RWPE1 (cell line): ENCODE measurements at regions of chr11 and their contacts with region 1.

Region 1: DNA sequence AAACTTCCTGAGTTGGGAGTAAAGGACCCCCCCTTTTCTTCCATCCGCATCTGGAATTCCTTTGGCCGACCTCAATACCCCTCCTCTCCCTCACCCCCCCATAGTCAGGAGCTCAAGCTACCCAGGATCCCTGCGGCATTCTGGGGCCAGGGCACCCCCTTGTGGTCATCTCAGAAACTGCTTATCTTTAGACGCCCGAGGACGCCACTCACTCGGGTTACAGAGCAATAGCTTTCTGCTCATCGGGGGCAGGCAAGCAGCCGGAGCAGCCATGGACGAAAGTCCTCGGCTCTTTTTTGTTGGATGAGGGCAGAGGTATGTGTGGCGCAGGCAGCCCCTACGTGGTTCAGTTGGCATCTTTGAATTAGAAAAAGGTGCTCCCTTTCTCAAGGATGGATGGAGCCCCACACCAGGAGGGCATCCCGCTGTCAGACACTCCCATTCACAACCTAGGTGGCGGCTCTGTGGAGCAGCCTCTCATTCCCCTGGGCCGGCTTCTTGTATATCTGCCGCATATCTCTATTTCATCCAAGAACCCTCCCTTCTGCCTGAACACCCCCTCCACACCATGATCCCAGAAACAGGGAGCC is 2.3 kb downstream of the C1QTNF5 start:
- DNase-seq: peak; percentile 73
- H3K27ac ChIP-seq: peak overlapping the region; percentile 82
- CTCF ChIP-seq: peak; percentile 85

Region 2: DNA sequence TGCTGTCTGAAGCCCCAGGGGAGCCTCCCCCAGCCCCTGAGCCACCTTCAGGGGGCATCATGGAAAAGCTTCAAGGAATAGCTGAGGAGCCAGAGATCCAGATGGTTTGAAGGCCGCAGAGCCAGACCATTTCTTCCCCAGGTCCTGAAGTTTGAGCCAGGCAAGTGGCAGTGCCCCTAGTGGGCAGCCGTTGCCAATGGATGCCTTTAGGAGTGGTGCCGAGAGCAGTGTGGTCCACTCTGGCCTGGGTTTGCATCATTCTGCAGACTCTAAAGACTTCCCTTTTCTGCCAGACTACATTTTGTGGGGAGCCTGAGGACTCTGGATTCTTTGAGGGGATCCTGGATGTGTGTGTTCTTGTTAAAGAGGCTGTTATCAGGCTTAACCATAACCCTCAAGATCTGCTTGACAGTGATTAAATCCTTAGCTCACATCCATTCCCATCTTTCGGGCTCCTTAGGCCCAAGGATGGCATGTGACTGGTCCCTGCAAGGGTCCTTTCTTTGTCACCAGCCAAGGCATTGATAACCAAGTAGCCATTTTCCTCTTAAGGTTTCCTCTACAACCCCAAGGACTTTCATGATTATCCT is 203.9 kb before region 1 on chr11:
- CTCF ChIA-PET with region 1: interaction called, 3 read pairs
- POLR2A ChIA-PET with region 1: interaction called, 10 read pairs
- DNase-seq: no peak
- H3K27ac ChIP-seq: peak overlapping the region; percentile 6; the same call in 1 of the 2 replicates
- CTCF ChIP-seq: peak; percentile 37; the same call in 1 of the 2 replicates

Region 3: DNA sequence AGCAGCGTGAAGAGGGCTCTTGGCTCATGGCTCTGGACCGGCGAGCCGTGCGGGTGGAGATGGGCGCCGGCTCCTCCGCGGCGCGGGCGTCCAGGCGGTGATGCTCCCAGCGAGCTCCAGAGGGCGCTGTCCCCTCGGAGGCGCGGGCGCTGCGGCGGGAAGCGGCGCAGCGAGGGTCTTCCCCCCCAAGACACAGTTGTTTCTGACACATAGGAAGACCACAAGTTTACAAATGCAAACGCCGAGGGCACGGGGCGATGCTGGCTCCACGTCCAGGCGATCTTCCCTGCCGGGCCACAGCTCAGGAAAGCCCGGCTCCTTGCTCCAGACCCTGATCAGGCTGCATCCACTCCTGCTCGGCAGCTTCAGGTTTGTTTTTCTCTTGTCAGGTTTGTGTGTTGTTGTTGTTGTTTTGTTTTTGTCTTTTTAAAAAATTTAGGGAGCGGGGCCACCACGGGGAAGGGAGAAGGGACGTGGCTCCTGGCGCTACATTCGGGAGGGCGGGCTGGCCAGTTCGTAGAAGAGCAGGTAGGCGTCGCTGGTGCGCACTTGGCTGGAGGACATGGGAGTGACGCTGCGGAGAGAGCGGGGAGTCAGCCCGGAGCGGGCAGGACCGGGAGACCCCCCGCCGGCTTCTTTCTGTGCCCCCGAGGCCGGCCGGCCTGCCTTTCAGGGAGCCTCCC is 18.1 kb after region 1 on chr11:
- CTCF ChIA-PET with region 1: interaction called, 26 read pairs
- POLR2A ChIA-PET with region 1: no interaction called
- DNase-seq: no peak
- H3K27ac ChIP-seq: peak overlapping the region; percentile 75
- CTCF ChIP-seq: peak; percentile 96

Region 4: DNA sequence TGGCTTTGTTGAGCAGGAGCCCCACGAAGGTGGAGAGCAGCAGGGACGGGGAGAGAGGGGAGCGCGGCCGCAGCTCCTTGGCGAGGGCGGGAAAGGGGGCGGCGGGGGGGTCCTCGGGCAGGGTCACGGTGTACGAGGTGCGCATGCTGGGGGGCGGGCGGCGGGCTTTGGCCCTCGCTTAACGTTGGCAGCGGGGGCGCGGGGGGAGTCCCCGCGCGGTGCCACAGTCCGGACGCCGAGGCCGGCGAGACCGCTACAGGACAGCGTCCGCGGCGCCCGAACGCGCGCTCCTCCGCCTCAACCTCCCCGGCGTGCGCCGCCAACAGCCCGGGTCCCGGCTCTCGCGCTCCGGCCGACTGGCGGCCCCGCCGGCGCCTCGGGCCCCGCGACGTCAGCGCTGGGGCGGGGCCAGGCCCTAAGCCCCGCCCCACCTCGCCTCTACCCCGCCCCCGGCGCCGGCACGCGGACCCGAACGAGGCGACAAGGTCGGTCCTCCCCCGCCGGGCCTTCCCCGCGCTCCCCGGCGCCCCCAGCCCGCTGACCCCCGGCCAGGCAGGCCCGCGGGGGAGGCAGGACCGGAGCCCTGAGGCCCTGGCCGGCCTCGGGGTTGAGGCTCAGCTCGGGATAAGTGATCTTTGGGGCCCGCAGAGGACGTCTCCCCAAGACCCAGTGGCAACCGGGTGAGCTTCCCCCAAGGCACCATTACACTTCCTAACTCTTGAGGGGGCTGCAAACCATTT is 25.6 kb after region 1 on chr11:
- CTCF ChIA-PET with region 1: interaction called, 12 read pairs
- POLR2A ChIA-PET with region 1: no interaction called
- DNase-seq: peak; percentile 61
- H3K27ac ChIP-seq: peak overlapping the region; percentile 100
- CTCF ChIP-seq: no peak

Region 5: GRCh38 chr11:119373921-119374631 is 35.7 kb after region 1 on chr11:
- CTCF ChIA-PET with region 1: interaction called, 13 read pairs
- POLR2A ChIA-PET with region 1: interaction called, 3 read pairs
- DNase-seq: peak; percentile 63
- H3K27ac ChIP-seq: peak overlapping the region; percentile 100
- CTCF ChIP-seq: peak; percentile 88

Region 6: DNA sequence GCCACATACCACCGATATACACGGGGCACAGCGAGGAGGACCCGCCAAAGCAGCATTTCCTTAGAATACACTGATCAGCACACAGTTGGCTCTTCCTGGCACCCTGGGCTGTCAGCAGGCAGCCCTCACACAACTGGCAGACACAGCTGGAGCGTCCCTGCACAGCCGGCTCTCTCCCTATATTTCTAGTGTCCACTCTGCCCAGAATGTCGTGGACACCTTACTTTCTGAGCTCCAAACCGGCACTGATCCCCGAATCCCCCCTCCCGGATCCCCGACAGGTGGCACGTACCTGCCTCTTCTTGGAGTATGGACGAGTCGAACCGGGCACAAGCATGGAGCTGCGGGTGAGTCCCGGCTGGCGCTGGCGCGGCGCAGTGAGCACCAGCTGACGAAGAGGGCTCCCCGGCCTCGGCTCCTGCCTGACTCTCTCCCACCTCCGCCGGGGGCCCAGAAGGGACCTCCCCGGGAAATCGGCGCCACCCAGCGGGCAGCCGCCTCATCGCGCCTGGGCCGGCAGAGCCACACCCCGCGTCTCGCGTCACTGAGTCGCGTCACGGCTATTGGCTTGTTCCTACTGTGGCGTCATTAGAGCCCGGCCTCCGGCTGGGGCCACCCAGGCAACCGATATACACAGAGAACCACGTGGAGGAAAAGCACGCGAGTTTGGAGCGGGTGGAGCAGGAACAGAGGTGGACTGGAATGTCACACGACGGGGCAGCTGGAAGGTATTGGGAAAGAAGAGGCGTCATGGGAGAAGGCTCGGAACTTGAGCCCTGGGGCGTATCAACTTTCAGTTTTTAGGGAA is 43.0 kb after region 1 on chr11 and contains the start of gene USP2:
- CTCF ChIA-PET with region 1: interaction called, 14 read pairs
- POLR2A ChIA-PET with region 1: no interaction called
- DNase-seq: peak; percentile 94
- H3K27ac ChIP-seq: peak within 1 kb of the TSS; percentile 53
- CTCF ChIP-seq: peak; percentile 96

Region 7: DNA sequence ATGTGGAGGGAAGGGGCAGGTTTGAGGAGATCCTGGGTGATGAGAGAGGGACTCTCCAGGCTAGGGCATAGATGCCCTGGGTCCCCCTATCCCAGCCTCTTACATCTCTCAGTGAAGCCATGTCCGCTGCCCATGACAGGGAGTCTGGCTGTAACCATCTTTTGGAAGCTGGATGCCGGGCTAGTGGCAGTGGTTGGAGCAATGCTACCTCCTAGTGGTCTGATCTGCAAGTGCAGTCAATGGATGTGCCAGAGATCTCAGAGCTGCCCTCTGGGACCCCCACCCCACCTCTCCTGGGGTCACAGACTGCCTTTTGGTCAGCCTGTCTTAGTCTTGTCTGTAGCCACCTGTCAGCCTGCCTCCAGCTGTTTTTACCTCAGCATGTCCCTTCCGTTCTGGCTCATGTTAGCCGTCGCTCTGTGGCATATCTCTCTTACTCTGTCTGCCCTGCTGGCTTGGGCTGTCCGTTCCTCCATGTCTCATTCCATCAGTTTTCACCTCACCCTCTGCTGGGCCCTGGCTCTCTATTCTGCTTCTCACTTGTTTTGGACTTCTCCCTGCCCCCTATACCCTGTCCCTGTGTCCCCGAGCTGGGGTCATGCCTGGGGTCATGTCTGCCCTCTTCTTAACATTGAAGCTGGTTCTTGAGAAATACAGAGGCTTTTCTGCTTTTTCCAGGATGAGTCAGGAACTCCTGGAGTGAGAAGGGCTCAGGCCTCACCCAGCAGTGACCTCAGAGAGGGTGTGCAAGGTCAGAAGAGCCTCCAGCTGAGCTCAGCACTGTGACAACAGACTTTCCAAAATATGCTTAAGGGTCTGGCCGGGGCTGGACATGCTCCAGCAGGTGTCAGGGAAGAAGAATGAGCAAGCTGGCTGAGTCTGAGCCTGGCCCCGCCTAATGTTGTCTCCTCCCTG is 136.5 kb after region 1 on chr11:
- CTCF ChIA-PET with region 1: interaction called, 17 read pairs
- POLR2A ChIA-PET with region 1: no interaction called
- DNase-seq: peak; percentile 57
- H3K27ac ChIP-seq: peak overlapping the region; percentile 80
- CTCF ChIP-seq: peak; percentile 82

Region 8: DNA sequence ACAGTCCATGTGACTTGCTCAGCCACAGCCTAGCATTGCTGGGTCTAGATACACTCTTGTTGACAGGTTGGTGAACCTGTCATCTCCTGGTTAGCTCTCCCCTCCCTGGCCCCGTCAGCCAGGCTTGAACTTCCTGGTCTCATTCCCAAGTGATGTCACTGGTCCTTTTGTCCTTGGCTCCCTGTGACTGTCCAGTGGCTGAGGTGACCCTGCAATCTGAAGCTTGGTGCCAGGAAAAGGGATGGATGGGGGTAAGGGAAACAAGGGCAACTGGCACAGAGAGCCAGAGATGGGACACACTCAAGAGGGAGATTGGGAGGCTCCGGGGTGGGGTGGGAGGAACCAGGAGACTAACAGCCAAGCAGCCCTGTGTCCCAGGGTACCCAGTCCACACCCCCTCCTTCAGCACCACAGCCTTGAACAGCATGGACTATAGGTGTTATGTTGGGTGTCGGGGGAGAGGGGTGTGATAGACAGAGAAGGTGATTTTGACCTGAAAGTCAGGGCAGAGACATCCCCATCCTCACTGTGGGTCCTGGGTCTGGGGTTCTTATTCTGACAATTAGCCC is 148.4 kb after region 1 on chr11:
- CTCF ChIA-PET with region 1: no interaction called
- POLR2A ChIA-PET with region 1: no interaction called
- DNase-seq: no peak
- H3K27ac ChIP-seq: no peak overlapping the region
- CTCF ChIP-seq: no peak

Region 9: GRCh38 chr11:119550053-119550752 is 211.8 kb after region 1 on chr11:
- CTCF ChIA-PET with region 1: no interaction called
- POLR2A ChIA-PET with region 1: no interaction called
- DNase-seq: no peak
- H3K27ac ChIP-seq: no peak overlapping the region
- CTCF ChIP-seq: no peak